Activated B cell treated with CpG ODN at 0.5 μM for 24 hours (primary cell): ENCODE measurements at regions of chr2 and their contacts with region 1.

Region 1: GRCh38 chr2:30089171-30089570 is 57.6 kb upstream of the YPEL5 start:
- DNase-seq: no peak
- ATAC-seq: no peak
- H3K4me3 Mint-ChIP-seq: no peak overlapping the region
- H3K27ac Mint-ChIP-seq: no peak overlapping the region
- H3K4me1 Mint-ChIP-seq: no peaks in the 10 kb centered on the region
- H3K27me3 Mint-ChIP-seq: peaks cover 34% of the 10 kb centered on the region
- CTCF ChIP-seq: no peak

Region 2: DNA sequence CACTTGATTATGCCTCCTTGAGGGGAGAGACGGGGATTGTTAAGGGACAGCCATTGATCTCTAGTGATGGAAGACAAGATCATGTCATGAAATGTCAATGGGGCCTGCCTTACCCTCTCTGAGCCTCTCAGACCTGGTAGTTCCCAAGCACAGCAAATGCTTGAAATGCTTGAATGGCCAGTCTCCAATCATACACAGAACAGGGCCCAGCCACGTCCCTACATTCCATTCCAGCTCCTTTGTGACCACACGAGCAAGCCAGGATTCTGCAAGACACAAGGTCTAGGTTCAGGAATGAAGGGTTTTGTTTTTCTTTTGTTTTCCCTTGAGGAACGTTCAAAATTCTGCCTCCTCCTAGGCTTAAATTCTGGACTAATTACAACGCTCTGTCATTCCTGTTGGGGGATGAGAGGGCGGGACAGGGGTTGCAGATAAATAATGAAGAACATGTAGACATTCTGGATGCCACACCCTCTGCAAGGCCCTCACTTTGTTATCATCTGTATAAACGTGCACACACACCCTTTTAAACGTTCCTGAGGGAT is 40.5 kb before region 1 on chr2:
- CTCF ChIA-PET with region 1: no interaction called
- POLR2A ChIA-PET with region 1: no interaction called
- intact Hi-C with region 1: no loop called
- DNase-seq: no peak
- ATAC-seq: no peak
- H3K4me3 Mint-ChIP-seq: no peak overlapping the region
- H3K27ac Mint-ChIP-seq: no peak overlapping the region
- H3K4me1 Mint-ChIP-seq: no peaks in the 10 kb centered on the region
- H3K27me3 Mint-ChIP-seq: peaks cover 12% of the 10 kb centered on the region
- CTCF ChIP-seq: no peak

Region 3: GRCh38 chr2:31523871-31524492 is 1434.8 kb after region 1 on chr2:
- CTCF ChIA-PET with region 1: no interaction called
- POLR2A ChIA-PET with region 1: no interaction called
- intact Hi-C with region 1: loop called (anchors 10 kb)
- DNase-seq: no peak
- ATAC-seq: no peak
- H3K4me3 Mint-ChIP-seq: no peak overlapping the region
- H3K27ac Mint-ChIP-seq: no peak overlapping the region
- H3K4me1 Mint-ChIP-seq: no peaks in the 10 kb centered on the region
- H3K27me3 Mint-ChIP-seq: peaks cover 30% of the 10 kb centered on the region
- CTCF ChIP-seq: peak; percentile 21